ENCODE measurements at regions of chr11 and their contacts with region 1.

Region 1: DNA sequence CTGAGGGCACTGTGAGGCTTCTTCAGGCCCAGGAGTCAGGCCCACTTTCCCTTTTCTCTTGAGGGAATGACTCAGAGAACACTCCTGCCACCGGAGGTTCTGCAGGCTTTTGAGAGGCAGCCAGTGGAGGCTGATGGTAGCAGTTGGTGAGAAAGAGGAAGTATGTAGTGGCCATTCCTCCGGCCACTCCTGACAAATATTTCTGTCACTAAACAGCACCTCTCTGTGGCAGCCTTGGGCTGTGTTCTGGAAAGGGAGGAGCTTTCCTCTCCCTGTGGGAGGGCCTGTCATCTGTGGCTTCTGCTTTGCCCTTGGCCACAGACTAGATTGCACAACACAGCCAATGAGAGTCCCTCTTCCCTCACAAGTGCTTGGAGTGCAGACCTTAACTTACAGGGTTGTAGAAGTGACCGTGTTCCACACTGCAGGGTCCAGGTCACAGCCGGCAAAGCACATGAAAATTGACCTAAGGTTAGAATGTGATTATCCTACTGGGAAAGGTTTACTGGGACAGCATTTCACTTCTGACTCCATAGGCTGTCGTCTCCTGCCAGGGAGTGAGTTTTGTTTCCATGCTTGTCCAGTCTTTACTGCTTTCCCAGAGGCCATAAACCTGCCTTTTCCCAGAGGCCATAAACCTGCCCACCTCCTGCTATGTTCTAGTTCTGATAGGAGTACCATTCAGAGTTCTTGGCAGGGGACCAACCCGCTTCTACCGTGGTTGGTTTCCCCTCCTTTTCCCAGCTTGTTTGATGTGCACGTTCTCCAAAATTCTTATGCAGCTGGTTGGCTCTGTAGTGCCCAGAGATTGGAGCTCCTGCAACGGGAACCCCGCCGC is 33.3 kb downstream of the MARK2 start:
- DNase-seq: peak; percentile 81 to 91
- ATAC-seq: peak; percentile 93
- H3K4me3 ChIP-seq: no peak overlapping the region
- H3K27ac ChIP-seq: peak overlapping the region in 1 of 2 donors; percentile 82
- H3K4me1 ChIP-seq: peaks cover 0 to 4% of the 10 kb centered on the region in 2 donors
- H3K27me3 ChIP-seq: no peaks in the 10 kb centered on the region

Region 2: GRCh38 chr11:63906585-63906984 is 34.4 kb after region 1 on chr11:
- intact Hi-C with region 1: no loop called
- DNase-seq: no peak
- ATAC-seq: no peak
- H3K4me3 ChIP-seq: no peak overlapping the region
- H3K27ac ChIP-seq: no peak overlapping the region
- H3K4me1 ChIP-seq: no peaks in the 10 kb centered on the region
- H3K27me3 ChIP-seq: no peaks in the 10 kb centered on the region

Region 3: DNA sequence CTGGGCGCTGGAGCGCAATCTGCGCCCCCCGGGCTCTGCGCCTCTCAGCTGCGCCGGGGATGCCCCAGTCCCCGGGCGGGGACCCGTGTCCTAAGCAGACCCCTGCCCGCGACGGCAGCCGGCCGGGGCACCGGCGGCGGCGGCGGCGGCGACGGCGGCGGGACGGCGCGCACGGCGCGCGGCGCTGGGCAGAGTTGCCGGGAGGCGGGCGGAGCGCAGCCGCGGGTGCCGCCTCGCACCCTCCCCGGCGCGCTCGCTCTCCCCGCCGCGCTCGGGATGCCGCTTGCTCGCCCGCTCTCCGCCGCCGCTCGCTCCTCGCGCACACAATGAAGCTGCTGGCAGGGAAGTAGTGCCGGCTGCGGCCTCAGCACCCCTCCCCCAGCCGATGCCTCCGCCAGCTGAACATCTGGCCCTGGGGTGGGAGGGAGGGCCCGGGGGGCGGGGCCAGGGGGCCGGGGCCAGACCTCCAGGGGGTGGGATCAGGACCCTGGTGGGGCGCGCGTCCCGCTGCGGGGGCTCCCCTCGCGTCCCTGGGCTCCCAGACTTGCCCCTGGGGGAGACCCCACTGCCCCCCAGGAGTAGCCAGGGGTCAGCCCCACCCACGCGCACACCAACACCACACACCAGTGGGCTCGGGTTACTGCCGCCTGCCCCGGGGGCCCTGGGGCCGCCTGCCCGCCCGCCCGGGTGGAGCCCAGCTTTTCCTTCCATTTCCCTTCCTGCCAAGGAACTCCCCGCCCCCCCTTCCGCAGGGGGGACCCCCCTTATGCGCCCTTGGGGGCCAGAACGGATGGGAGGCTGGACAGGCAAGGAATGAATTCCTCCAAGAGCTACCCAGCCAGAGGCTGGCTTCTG is 44.9 kb after region 1 on chr11 and contains the start of gene RCOR2:
- intact Hi-C with region 1: loop called in 1 of 2 experiments (anchors 5 kb)
- DNase-seq: peak; percentile 88 to 92
- ATAC-seq: peak; percentile 51
- H3K4me3 ChIP-seq: peak within 1 kb of the TSS; percentile 36 to 46
- H3K27ac ChIP-seq: peak within 1 kb of the TSS; percentile 23 to 89
- H3K4me1 ChIP-seq: no peaks in the 10 kb centered on the region
- H3K27me3 ChIP-seq: no peaks in the 10 kb centered on the region
- total RNA-seq, gene RCOR2: 0.78 to 4.8 TPM